IMR-90 (cell line): ENCODE measurements at regions of chr3 and their contacts with region 1.

Region 1: GRCh38 chr3:66413151-66413751 is 87.6 kb downstream of the LRIG1 start:
- DNase-seq: peak; percentile 100
- ATAC-seq: peak; percentile 93
- H3K4me3 ChIP-seq: no peak overlapping the region
- H3K27ac ChIP-seq: peak overlapping the region; percentile 79
- H3K4me1 ChIP-seq: peaks cover 22% of the 10 kb centered on the region
- H3K27me3 ChIP-seq: no peaks in the 10 kb centered on the region
- CTCF ChIP-seq: 0 out of 2 replicates have a peak, but pooled peaks have one; percentile 13
- POLR2A ChIP-seq: peak; percentile 46; the same call in 1 of the 2 replicates
- RAD21 ChIP-seq: peak; percentile 35

Region 2: GRCh38 chr3:66456711-66457173 is 43.5 kb after region 1 on chr3:
- CTCF ChIA-PET with region 1: no interaction called
- POLR2A ChIA-PET with region 1: no interaction called
- dilution Hi-C with region 1: no loop called
- in situ Hi-C with region 1: no loop called
- intact Hi-C with region 1: loop called (anchors 1 kb)
- DNase-seq: no peak
- ATAC-seq: no peak
- H3K4me3 ChIP-seq: no peak overlapping the region
- H3K27ac ChIP-seq: no peak overlapping the region
- H3K4me1 ChIP-seq: 0 out of 2 replicates have a peak, but pooled peaks cover under 1% of the 10 kb centered on the region
- H3K27me3 ChIP-seq: no peaks in the 10 kb centered on the region
- CTCF ChIP-seq: no peak
- POLR2A ChIP-seq: no peak
- RAD21 ChIP-seq: no peak

Region 3: DNA sequence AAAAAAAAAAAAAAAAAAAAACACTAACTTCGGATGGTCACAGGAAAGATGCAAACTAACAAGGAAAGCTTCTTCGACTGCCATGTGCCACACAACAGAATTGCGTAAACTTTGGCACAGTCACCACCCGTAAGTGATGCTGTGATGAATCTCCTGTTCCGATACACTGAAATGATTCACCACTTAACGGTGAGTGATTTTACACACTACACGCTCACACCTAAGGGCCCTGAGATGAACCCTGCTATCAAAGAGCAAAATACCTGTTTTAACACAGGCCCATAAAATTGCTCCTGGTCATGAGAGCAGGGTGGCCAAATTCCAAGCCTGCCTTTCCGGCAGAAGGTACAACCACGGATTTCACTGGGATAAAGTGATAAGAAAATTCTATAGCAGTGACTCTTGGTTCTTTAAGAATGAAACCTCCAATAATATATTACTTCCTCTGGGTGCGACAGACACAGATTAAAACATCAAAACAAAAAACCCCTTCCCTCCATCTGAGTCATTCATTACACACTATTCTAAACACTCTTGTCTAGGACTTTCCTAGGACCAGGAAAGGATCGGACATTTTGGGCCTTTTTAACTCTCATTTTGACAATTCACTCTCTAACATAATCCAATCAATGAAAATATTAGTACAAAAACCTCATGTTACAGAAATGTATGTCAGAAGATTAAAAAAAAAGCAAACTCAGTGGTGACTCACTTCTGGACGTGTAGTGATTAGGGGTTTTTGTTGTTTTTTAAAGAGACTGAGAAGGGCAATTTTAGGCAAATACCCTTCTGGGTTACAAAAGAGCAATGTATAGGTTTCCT is 59.3 kb after region 1 on chr3:
- CTCF ChIA-PET with region 1: no interaction called
- POLR2A ChIA-PET with region 1: no interaction called
- dilution Hi-C with region 1: no loop called
- in situ Hi-C with region 1: no loop called
- intact Hi-C with region 1: loop called (anchors 2 kb)
- DNase-seq: peak; percentile 88
- ATAC-seq: peak; percentile 57
- H3K4me3 ChIP-seq: no peak overlapping the region
- H3K27ac ChIP-seq: peak overlapping the region; percentile 25
- H3K4me1 ChIP-seq: peaks cover 21% of the 10 kb centered on the region
- H3K27me3 ChIP-seq: no peaks in the 10 kb centered on the region
- CTCF ChIP-seq: no peak
- POLR2A ChIP-seq: peak; percentile 55; the same call in 1 of the 2 replicates
- RAD21 ChIP-seq: no peak

Region 4: DNA sequence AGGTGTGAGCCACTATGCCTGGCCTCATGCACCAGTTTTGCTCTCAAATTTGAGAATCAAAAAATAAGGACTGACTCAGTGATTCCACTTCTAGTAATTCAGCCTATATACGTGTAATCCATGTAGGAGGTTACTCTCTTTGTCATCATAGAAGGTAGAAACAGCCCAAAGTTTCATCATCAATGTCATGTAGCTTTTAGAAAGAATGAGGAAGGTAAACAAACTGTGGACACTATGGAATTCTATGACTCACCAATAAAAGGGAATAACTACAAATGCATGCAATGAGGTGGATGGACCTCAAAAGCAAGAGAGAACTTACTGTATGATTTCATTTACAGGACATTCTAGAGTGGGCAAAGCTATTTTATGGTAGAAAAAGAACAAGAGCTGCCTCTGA is 180.7 kb after region 1 on chr3:
- CTCF ChIA-PET with region 1: no interaction called
- POLR2A ChIA-PET with region 1: no interaction called
- dilution Hi-C with region 1: no loop called
- in situ Hi-C with region 1: loop called (anchors 10 kb)
- intact Hi-C with region 1: loop called (anchors 10 kb)
- DNase-seq: peak; percentile 99
- ATAC-seq: peak; percentile 68
- H3K4me3 ChIP-seq: no peak overlapping the region
- H3K27ac ChIP-seq: peak overlapping the region; percentile 57
- H3K4me1 ChIP-seq: peaks cover 12% of the 10 kb centered on the region
- H3K27me3 ChIP-seq: no peaks in the 10 kb centered on the region
- CTCF ChIP-seq: no peak
- POLR2A ChIP-seq: no peak
- RAD21 ChIP-seq: peak; percentile 1; the same call in 1 of the 2 replicates